ENCODE measurements at regions of chr2 and their contacts with region 1.

Region 1: GRCh38 chr2:153145470-153145978 is 333.0 kb downstream of the RPRM start:
- DNase-seq: no peak
- H3K4me3 ChIP-seq: no peak overlapping the region
- H3K27ac ChIP-seq: no peak overlapping the region
- H3K4me1 ChIP-seq: peaks cover 0 to 27% (median 21%) of the 10 kb centered on the region in 4 donors
- H3K27me3 ChIP-seq: no peaks in the 10 kb centered on the region
- CTCF ChIP-seq: no peak
- EP300 ChIP-seq: no peak
- POLR2A ChIP-seq: no peak

Region 2: GRCh38 chr2:152005607-152006006 is 1139.9 kb before region 1 on chr2:
- intact Hi-C with region 1: no loop called
- DNase-seq: no peak
- H3K4me3 ChIP-seq: no peak overlapping the region
- H3K27ac ChIP-seq: no peak overlapping the region
- H3K4me1 ChIP-seq: peaks cover 0 to 18% (median 12%) of the 10 kb centered on the region in 4 donors
- H3K27me3 ChIP-seq: no peaks in the 10 kb centered on the region
- CTCF ChIP-seq: no peak
- EP300 ChIP-seq: no peak
- POLR2A ChIP-seq: no peak

Region 3: DNA sequence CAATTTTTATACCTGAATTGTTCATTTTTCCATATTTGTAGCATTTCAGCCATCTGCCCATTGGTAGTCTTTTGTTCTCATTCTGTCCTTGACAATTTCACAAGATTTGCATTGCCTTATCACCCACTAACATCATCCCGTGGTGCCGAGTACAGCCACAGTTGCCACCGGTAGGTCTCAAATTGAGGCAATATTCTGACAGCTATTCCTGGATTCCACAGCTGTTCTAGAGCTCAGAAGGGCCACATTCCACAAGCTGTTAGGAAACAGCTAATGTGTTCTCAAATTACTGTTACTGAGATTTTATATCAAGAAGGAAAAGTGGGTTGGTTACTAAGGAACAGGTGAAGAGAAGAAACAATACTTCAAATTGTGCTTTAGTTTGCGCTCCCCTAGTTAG is 154.3 kb after region 1 on chr2:
- intact Hi-C with region 1: loop called (anchors 10 kb)
- DNase-seq: no peak
- H3K4me3 ChIP-seq: no peak overlapping the region
- H3K27ac ChIP-seq: no peak overlapping the region
- H3K4me1 ChIP-seq: peaks cover 0 to 16% (median 6%) of the 10 kb centered on the region in 4 donors
- H3K27me3 ChIP-seq: no peaks in the 10 kb centered on the region
- CTCF ChIP-seq: no peak
- EP300 ChIP-seq: no peak
- POLR2A ChIP-seq: no peak

Measured in sigmoid colon (tissue), 7 donors.